ENCODE measurements at regions of chr20 and their contacts with region 1.

Region 1: DNA sequence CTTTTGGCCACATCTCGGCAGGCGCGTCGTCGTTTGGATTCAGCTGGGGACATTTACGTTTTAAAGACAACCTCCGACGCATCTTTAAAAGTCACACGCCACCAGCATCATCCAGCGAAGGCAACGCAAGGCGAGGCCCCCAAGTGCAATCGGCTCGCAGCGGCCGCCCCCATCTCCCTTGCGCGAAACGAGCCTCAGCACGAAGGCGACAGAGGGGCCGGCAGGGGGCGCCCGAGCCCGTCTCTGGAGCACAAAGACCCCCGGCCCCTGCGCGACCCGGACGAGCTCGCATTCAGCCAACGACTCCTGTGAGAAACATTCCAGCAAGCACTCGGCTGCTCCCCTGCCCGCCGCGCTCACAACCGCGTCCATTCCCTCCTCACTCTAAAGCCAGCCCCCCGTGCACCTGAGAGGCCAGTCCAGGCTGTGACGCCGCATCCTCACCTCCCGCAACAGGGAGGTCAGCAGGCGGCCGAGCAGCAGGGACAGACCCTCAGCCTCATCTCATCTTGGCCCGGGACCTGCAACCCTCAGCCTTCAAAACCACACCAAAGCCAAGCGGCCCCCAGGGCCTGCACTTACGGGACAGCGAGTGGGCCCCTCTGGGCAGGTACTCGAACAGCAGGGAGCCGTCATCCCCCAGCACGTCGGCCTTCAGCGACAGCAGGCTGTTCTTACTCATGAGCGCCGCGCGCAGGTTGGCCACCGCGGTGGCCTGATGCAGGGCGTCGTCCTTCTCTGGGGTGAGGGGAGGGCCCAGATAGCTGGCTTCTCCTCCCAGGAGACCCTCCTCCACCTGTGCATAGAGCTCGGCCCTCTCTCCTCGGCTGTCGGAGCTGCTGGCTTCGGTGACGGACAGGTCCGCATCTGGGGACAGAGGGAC is 35.8 kb downstream of the SLC2A4RG start:
- DNase-seq: peak in 1 of 2 experiments; percentile 95
- H3K4me3 ChIP-seq: peak overlapping the region; percentile 12 to 62 (median 46); a peak in 7 of 8 replicates
- H3K27ac ChIP-seq: no peak overlapping the region
- H3K4me1 ChIP-seq: peaks cover 0 to 9% (median 6%) of the 10 kb centered on the region in 4 experiments; a peak in 5 of 7 replicates
- H3K27me3 ChIP-seq: no peaks in the 10 kb centered on the region
- CTCF ChIP-seq: peak; percentile 72 to 81 (median 76)
- EP300 ChIP-seq: no peak
- POLR2A ChIP-seq: no peak
- RAD21 ChIP-seq: peak; percentile 70 to 80

Region 2: DNA sequence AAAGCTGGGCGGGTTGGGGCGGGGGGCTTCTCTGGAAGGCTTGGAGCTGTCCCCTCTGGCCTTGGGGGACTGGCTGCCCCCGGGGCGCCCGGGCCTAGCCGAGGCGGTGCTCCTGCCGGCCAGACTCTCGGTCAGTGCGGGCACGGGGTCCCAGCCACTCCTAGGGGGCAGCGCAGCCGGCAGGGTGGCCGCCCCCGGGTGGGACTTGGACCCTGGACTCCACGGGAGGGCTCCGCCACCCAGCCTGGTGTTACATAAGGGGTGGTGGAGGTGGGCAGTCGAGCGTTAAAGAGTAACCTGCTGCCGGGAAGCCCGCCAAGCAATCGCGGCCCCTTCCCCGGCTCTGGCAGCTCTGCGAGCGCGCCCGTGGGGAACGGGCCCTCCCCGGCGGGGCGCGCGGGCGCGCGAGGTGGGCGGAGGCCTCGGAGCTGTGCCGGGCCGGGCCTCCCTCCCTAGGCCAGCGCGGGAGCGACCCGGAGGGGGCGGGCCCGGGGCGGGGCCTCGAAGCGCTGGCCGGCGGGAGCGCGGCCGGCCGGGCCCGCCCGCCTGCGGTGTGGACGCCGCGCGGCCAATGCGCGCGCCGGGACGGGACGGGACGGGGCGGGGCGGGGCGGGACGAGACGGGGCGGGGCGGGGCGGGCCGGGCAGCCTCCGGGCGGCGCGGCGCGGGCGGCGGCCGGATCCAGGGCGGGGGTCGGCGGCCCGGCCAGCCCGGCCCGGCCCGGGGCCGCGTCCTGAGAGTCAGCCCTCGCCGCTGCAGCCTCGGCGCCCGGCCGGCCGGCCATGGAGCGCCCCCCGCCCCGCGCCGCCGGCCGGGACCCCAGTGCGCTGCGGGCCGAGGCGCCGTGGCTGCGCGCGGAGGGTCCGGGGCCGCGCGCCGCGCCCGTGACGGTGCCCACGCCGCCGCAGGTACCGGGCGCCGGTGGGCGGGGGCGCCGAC is 35.9 kb before region 1 on chr20 and contains the start of gene SLC2A4RG:
- CTCF ChIA-PET with region 1: interaction called, 18 read pairs
- POLR2A ChIA-PET with region 1: interaction called, 6 read pairs
- DNase-seq: peak in 1 of 2 experiments; percentile 79
- H3K4me3 ChIP-seq: peak within 1 kb of the TSS; percentile 49 to 83 (median 60)
- H3K27ac ChIP-seq: no peak within 1 kb of the TSS
- H3K4me1 ChIP-seq: peaks cover 0 to 20% (median 11%) of the 10 kb centered on the region in 4 experiments; a peak in 6 of 7 replicates
- H3K27me3 ChIP-seq: peaks cover 0 to 12% (median 8%) of the 10 kb centered on the region in 4 experiments; a peak in 4 of 7 replicates
- CTCF ChIP-seq: no peak
- EP300 ChIP-seq: no peak
- POLR2A ChIP-seq: no peak
- RAD21 ChIP-seq: no peak
- total RNA-seq, gene SLC2A4RG: 25.0 and 29.1 TPM in 2 replicates

Region 3: DNA sequence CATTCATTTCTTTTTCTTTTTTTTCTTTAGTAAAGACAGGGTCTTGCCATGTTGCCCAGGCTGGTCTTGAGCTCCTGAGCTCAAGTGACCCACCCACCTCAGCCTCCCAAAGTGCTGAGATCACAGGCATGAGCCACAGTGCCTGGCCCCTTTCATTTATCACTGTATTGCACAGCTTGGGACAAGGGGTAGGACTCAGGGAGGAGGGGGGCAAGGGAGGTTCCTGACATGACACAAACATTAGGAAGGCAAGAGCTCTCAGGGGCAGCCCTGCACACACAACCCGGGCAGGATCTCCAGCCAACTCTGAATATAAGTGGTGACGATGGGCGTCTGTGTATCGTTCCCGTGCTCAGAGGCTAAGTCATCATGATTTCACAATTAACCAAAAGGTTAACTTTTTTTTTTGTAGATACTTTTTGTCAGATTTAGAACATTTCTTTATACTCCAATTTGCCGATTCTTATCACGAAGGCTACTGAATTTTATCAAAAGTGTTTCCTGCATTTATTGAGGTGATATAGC is 15.9 kb before region 1 on chr20:
- CTCF ChIA-PET with region 1: interaction called, 29 read pairs
- POLR2A ChIA-PET with region 1: interaction called, 3 read pairs
- DNase-seq: no peak
- H3K4me3 ChIP-seq: no peak overlapping the region
- H3K27ac ChIP-seq: no peak overlapping the region
- H3K4me1 ChIP-seq: no peaks in the 10 kb centered on the region
- H3K27me3 ChIP-seq: no peaks in the 10 kb centered on the region
- CTCF ChIP-seq: no peak
- EP300 ChIP-seq: no peak
- POLR2A ChIP-seq: no peak
- RAD21 ChIP-seq: no peak

Region 4: DNA sequence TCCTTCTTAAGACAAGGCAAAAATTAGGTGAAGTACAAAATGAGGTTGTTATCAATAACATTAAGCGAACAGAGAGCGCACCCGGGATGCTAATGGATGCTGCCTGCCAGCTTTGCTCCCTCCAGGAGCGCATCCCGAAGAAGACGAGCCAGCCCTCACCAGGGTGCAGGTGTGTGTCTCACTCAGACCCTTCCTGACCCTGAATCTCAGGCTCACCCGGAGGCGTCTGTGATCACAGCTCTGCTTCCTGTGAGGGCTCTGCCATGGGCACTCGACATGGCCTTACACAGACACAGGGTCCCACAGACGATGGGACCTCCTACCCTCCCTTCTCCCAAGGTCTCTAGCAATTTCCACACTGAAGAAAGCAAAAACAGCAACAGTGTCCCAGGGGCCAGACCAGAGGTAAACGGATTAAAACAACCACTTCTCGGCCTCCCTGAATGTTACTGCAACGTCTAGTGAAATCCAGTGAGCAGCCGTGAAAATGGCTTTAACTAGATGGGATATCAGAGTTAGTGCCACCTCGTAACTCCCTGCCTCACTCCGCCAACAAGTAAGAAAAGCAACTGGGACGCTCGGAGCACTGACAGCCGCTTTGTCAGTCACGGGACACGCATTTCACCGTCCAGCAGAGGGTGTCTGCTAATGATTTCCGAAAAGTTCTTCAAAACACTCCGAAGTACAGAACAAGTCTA is 44.0 kb after region 1 on chr20:
- CTCF ChIA-PET with region 1: interaction called, 10 read pairs
- POLR2A ChIA-PET with region 1: no interaction called
- DNase-seq: no peak
- H3K4me3 ChIP-seq: no peak overlapping the region
- H3K27ac ChIP-seq: no peak overlapping the region
- H3K4me1 ChIP-seq: peaks cover 0 to 1% (median 0%) of the 10 kb centered on the region in 4 experiments; a peak in 1 of 7 replicates
- H3K27me3 ChIP-seq: no peaks in the 10 kb centered on the region
- CTCF ChIP-seq: peak; percentile 19 to 35 (median 33); a peak in 3 of 4 replicates
- EP300 ChIP-seq: no peak
- POLR2A ChIP-seq: no peak
- RAD21 ChIP-seq: peak; percentile 18 to 39; a peak in 2 of 4 replicates

Region 5: DNA sequence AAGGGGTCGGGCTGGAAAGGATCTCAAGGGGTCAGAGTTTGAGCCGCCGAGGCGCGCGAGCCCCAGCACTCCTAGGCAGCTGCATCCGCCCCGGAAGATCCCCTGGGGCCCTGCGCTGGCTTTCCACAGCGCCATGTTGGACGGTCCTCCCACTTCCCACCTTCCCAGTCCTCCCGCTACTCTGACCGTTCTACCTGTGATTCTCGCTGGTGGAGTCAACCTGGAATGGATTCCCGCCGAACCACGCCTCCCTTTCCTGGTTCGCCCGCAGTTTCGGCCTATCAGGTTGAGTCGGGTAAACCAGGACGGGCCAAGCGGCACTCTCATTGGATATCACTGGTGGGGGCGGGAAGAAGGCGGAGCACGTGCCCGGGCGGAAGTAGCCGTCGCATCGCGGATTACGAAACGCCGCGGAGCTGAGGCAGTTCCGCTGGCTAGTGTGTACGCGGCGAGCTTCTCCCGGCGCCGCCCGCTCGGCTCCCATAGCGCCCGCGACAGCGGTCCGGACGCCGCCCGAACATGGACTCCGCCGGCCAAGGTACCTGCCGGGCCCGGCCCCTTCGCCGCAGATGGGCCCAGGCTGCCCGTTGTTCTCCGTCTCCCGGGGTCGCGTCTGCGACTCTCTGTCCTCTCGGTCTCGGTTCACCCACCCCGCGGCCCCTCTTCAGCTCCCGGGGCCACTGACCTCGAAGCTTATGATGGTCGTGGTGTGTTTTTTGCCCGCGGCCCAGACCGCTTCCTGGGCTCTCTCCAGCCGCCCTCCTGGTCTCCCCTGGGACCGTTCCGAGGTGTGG is 89.7 kb after region 1 on chr20 and contains the start of gene TPD52L2:
- CTCF ChIA-PET with region 1: interaction called, 59 read pairs
- POLR2A ChIA-PET with region 1: interaction called, 22 read pairs
- DNase-seq: peak; percentile 96 to 98
- H3K4me3 ChIP-seq: peak within 1 kb of the TSS; percentile 82 to 95 (median 92)
- H3K27ac ChIP-seq: peak within 1 kb of the TSS; percentile 69; the same call in 1 of the 2 replicates
- H3K4me1 ChIP-seq: peaks cover 0 to 9% (median 4%) of the 10 kb centered on the region in 4 experiments; a peak in 5 of 7 replicates
- H3K27me3 ChIP-seq: no peaks in the 10 kb centered on the region
- CTCF ChIP-seq: no peak
- EP300 ChIP-seq: no peak
- POLR2A ChIP-seq: peak; percentile 91 to 97
- RAD21 ChIP-seq: no peak
- total RNA-seq, gene TPD52L2: 77.1 and 78.1 TPM in 2 replicates

Region 6: GRCh38 chr20:63942250-63942959 is 167.1 kb after region 1 on chr20:
- CTCF ChIA-PET with region 1: interaction called, 17 read pairs
- POLR2A ChIA-PET with region 1: interaction called, 3 read pairs
- DNase-seq: peak; percentile 78 to 88
- H3K4me3 ChIP-seq: peak overlapping the region in 2 of 4 experiments; percentile 0 to 42; a peak in 5 of 8 replicates
- H3K27ac ChIP-seq: no peak overlapping the region
- H3K4me1 ChIP-seq: peaks cover 0 to 28% (median 13%) of the 10 kb centered on the region in 4 experiments; a peak in 6 of 7 replicates
- H3K27me3 ChIP-seq: no peaks in the 10 kb centered on the region
- CTCF ChIP-seq: no peak
- EP300 ChIP-seq: no peak
- POLR2A ChIP-seq: no peak
- RAD21 ChIP-seq: no peak